ENCODE measurements at regions of chrX and their contacts with region 1.

Region 1: GRCh38 chrX:152641996-152642395 is 4.3 kb downstream of the GABRQ start:
- DNase-seq: no peak
- ATAC-seq: peak in 2 of 8 donors; percentile 57 to 62
- H3K4me3 ChIP-seq: no peak overlapping the region
- H3K27ac ChIP-seq: no peak overlapping the region
- H3K4me1 ChIP-seq: no peaks in the 10 kb centered on the region
- H3K27me3 ChIP-seq: peaks cover 0 to 54% (median 24%) of the 10 kb centered on the region in 7 donors
- CTCF ChIP-seq: peak in 6 of 9 donors; percentile 10 to 33 (median 22)

Region 2: GRCh38 chrX:151703487-151703886 is 938.5 kb before region 1 on chrX:
- intact Hi-C with region 1: loop called in 1 of 10 experiments (anchors 5 kb)
- DNase-seq: peak; percentile 65 to 74
- ATAC-seq: peak; percentile 70 to 93 (median 84)
- H3K4me3 ChIP-seq: no peak overlapping the region
- H3K27ac ChIP-seq: peak overlapping the region in 2 of 10 donors; percentile 65 to 73
- H3K4me1 ChIP-seq: peaks cover 0 to 17% (median 7%) of the 10 kb centered on the region in 9 donors
- H3K27me3 ChIP-seq: peaks cover 0 to 15% (median 0%) of the 10 kb centered on the region in 7 donors
- CTCF ChIP-seq: no peak

Region 3: GRCh38 chrX:151954730-151955129 is 687.3 kb before region 1 on chrX:
- intact Hi-C with region 1: no loop called
- DNase-seq: no peak
- ATAC-seq: no peak
- H3K4me3 ChIP-seq: no peak overlapping the region
- H3K27ac ChIP-seq: no peak overlapping the region
- H3K4me1 ChIP-seq: no peaks in the 10 kb centered on the region
- H3K27me3 ChIP-seq: no peaks in the 10 kb centered on the region
- CTCF ChIP-seq: no peak

Region 4: GRCh38 chrX:152520653-152521052 is 121.3 kb before region 1 on chrX:
- intact Hi-C with region 1: no loop called
- DNase-seq: no peak
- ATAC-seq: no peak
- H3K4me3 ChIP-seq: no peak overlapping the region
- H3K27ac ChIP-seq: no peak overlapping the region
- H3K4me1 ChIP-seq: no peaks in the 10 kb centered on the region
- H3K27me3 ChIP-seq: no peaks in the 10 kb centered on the region
- CTCF ChIP-seq: no peak

Region 5: GRCh38 chrX:152817078-152817764 is 175.2 kb after region 1 on chrX:
- intact Hi-C with region 1: loop called in 7 of 10 experiments (anchors 2 to 5 kb)
- DNase-seq: no peak
- ATAC-seq: no peak
- H3K4me3 ChIP-seq: no peak overlapping the region
- H3K27ac ChIP-seq: no peak overlapping the region
- H3K4me1 ChIP-seq: no peaks in the 10 kb centered on the region
- H3K27me3 ChIP-seq: peaks cover 0 to 30% (median 0%) of the 10 kb centered on the region in 7 donors
- CTCF ChIP-seq: peak in 7 of 9 donors; percentile 27 to 48 (median 40)